Activated CD8-positive, alpha-beta T cell treated with anti-CD3 and anti-CD28 coated beads for 36 hours (primary cell): ENCODE measurements at regions of chr1 and their contacts with region 1.

Region 1: GRCh38 chr1:181159451-181160140 is 71.1 kb downstream of the IER5 start:
- DNase-seq: peak; percentile 65
- ATAC-seq: peak; percentile 91
- H3K4me3 Mint-ChIP-seq: peak overlapping the region; percentile 51
- H3K27ac Mint-ChIP-seq: peak overlapping the region; percentile 58
- H3K4me1 Mint-ChIP-seq: peaks cover 26% of the 10 kb centered on the region
- H3K27me3 Mint-ChIP-seq: peaks cover 2% of the 10 kb centered on the region
- CTCF ChIP-seq: no peak

Region 2: DNA sequence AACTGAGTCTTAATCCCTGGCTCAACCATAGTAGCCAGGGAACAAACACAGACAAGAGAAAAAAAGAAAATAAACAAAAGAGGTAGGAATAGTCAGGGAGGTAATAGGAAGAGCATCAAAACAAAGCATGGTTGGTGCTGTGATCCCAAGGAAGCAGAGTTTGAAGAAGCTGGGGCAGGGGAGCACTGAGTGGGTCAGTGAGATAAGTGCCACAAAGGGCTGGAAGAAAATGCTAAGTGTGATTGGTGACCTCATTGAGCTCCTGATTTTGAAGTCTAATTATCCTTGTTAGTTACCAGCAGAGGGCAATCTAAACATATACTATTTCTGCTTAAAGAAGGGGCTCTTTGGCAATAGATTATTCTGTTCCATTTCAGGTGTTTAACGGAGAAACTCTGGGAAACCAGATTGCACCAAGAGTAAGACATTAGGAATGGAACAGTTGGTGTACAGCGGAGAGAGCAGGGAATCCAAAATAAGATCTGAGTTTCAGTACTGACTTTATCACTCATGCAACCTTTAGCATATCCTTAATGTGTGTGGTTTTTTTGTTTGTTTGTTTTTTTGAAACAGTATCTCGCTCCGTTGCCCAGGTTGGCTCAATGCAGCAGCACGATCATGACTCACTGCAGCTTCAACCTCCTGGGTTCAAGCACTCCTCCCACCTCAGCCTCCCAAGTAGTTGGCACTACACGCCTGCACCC is 277.6 kb before region 1 on chr1:
- CTCF ChIA-PET with region 1: interaction called, 11 read pairs
- POLR2A ChIA-PET with region 1: no interaction called
- intact Hi-C with region 1: no loop called
- DNase-seq: no peak
- ATAC-seq: peak; percentile 65
- H3K4me3 Mint-ChIP-seq: no peak overlapping the region
- H3K27ac Mint-ChIP-seq: peak overlapping the region; percentile 33
- H3K4me1 Mint-ChIP-seq: peaks cover 7% of the 10 kb centered on the region
- H3K27me3 Mint-ChIP-seq: no peaks in the 10 kb centered on the region
- CTCF ChIP-seq: peak; percentile 56

Region 3: DNA sequence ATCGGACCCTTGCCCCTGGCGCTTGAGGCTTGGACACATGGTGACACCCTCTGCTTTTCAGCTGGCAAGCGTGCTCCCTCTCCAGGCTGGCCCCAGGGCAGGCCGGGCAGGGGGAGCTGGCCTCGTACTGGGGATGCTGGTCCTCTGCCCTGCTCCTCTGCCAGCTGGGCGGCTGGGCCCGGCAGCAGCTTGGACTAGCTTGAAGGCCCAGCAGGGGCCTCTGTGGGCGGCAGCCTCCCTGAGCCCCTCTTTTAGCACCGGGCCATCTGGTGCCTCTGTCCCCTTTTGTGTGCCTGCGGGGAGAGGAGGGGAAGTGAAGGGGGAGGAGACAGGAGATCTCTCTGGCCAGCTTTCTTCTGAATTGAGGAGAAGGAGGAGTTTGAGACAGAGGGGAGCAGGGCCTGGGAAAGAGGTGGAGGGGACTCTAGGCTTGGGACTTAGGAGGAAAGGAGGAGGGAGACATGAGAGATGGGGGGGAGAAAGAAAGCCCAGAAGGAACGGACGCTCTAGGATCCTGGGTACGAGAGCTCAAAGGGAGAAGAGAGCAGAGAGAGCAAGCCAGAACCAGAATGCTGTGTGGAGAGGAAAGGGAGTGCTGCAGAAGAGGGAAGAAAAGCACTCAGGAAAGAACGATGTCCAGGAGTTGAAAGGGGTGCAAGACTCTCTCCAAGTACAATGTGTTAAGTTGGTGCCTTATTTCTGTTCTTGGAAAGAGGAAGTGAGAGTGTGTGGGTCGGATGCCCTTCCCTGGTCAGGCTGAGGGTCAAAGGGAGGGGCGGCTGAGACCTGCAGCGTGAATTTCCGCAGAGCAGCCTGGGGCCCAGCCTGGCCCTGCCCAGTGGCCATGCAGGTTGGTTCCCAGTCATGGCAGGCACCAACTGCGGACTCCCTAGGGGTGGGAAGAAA is 30.8 kb before region 1 on chr1:
- CTCF ChIA-PET with region 1: no interaction called
- POLR2A ChIA-PET with region 1: no interaction called
- intact Hi-C with region 1: no loop called
- DNase-seq: no peak
- ATAC-seq: no peak
- H3K4me3 Mint-ChIP-seq: no peak overlapping the region
- H3K27ac Mint-ChIP-seq: no peak overlapping the region
- H3K4me1 Mint-ChIP-seq: peaks cover 36% of the 10 kb centered on the region
- H3K27me3 Mint-ChIP-seq: peaks cover 10% of the 10 kb centered on the region
- CTCF ChIP-seq: no peak